CD14-positive monocyte (primary cell): ENCODE measurements at regions of chr1 and their contacts with region 1.

Region 1: GRCh38 chr1:111139956-111140679 is at the starts of genes CEPT1 and DRAM2:
- DNase-seq: peak; percentile 90 to 91 (median 90)
- H3K4me3 ChIP-seq: peak within 1 kb of the TSS; percentile 68 to 99 (median 92)
- H3K4me3 Mint-ChIP-seq: peak within 1 kb of the TSS; percentile 99 to 100
- H3K27ac ChIP-seq: peak within 1 kb of the TSS; percentile 77 to 91
- H3K27ac Mint-ChIP-seq: peak within 1 kb of the TSS; percentile 95 to 99 (median 97)
- H3K4me1 ChIP-seq: peaks cover 35 to 49% of the 10 kb centered on the region in 2 donors
- H3K4me1 Mint-ChIP-seq: peaks cover 56% of the 10 kb centered on the region
- H3K27me3 ChIP-seq: no peaks in the 10 kb centered on the region
- H3K27me3 Mint-ChIP-seq: peaks cover 0 to 1% (median 0%) of the 10 kb centered on the region in 3 donors
- CTCF ChIP-seq: no peak
- polyA plus RNA-seq, gene CEPT1: 20.8 to 44.3 (median 26.9) TPM
- polyA plus RNA-seq, gene DRAM2: 85.9 to 204 (median 190) TPM

Region 2: DNA sequence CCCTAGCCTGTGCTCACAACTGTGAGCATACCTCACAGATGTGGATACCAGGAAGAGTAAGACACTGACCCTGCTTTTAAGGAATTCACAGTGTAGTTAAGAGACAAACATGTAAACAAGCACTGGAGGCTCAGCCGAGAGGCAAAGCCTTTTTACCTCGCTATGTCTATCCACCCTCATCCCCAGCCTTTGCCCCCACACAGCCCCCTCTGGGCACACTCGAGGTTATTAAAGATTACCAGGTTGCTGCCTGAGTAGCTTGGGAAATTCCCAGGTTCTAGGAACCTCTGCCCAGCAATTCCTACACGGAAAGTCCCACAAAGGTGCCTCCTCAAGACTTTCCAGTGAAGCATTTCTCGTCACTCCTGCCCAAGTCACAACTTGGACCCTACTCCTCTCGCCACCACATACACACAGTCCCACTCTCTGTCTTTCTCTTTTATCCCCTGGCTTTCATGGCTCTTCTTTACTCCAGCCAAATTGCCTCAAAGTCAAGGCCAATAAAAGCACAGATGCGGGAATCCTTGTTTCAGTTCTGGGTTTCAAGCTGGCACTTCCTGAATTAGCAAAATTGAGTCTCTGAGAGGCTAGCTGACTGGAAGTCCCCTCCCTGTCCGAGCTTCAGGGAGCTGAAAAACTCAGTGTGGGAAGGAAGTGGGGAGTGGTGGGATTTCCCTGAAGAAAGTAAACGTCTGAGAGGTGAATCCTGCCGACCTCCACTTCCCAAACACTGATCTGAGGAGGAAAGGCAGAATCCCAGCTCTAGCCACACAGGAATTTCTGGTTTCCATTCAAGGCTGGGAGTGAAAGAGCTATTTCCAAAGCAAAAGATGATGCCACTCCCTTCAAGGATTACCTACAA is 52.8 kb after region 1 on chr1:
- intact Hi-C with region 1: loop called in 1 of 2 experiments (anchors 5 kb)
- DNase-seq: peak; percentile 65 to 96 (median 86)
- H3K4me3 ChIP-seq: peak overlapping the region in 1 of 3 experiments; percentile 52
- H3K4me3 Mint-ChIP-seq: peak overlapping the region; percentile 24 to 78
- H3K27ac ChIP-seq: peak overlapping the region; percentile 79 to 86
- H3K27ac Mint-ChIP-seq: peak overlapping the region; percentile 82 to 97 (median 91)
- H3K4me1 ChIP-seq: peaks cover 77 to 90% of the 10 kb centered on the region in 2 donors
- H3K4me1 Mint-ChIP-seq: peaks cover 71% of the 10 kb centered on the region
- H3K27me3 ChIP-seq: no peaks in the 10 kb centered on the region
- H3K27me3 Mint-ChIP-seq: no peaks in the 10 kb centered on the region
- CTCF ChIP-seq: no peak

Region 3: GRCh38 chr1:111346089-111346885 is 206.2 kb after region 1 on chr1:
- intact Hi-C with region 1: no loop called
- DNase-seq: peak; percentile 75 to 83 (median 80)
- H3K4me3 ChIP-seq: peak overlapping the region; percentile 46 to 75 (median 66)
- H3K4me3 Mint-ChIP-seq: peak overlapping the region; percentile 86 to 96
- H3K27ac ChIP-seq: peak overlapping the region; percentile 12 to 21
- H3K27ac Mint-ChIP-seq: peak overlapping the region; percentile 67 to 90 (median 86)
- H3K4me1 ChIP-seq: peaks cover 8 to 12% of the 10 kb centered on the region in 2 donors
- H3K4me1 Mint-ChIP-seq: peaks cover 12% of the 10 kb centered on the region
- H3K27me3 ChIP-seq: peaks cover 0 to 13% of the 10 kb centered on the region in 2 donors
- H3K27me3 Mint-ChIP-seq: peaks cover 2 to 30% (median 19%) of the 10 kb centered on the region in 3 donors
- CTCF ChIP-seq: no peak

Region 4: DNA sequence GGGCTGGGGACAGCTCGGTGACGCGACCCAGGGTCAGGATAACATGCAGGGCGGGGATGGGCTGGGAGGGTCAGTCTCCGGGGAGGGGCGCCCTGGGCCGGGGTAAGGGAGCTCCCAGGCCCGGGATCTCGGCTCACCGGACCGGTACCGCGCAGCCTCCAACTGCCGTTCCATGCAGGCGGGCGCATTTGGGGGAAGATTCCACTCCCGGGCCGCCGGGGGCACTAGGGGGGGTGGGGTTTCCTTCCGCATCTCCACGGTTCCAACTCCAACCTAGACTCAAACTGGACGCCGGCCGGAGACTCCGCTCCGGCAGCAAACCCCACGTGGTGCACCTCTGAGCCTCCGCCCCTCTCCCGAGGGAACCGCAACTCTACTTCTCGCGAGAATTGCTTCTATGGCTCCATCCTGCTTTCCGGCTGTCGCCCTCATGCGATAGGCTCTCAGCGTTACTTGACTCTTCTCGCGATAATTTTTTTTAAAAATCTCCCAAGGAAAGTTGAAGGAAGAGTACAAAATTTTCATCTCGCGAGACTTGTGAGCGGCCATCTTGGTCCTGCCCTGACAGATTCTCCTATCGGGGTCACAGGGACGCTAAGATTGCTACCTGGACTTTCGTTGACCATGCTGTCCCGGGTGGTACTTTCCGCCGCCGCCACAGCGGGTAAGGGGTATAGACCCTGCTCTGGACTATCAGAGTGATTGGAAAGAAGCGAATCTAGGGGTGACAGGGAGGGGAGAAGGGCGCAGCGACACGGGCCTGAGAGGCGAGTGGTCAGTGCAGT is 309.0 kb after region 1 on chr1 and contains the starts of genes ATP5PB and WDR77:
- intact Hi-C with region 1: loop called in 1 of 2 experiments (anchors 10 kb)
- DNase-seq: peak; percentile 98 to 100 (median 99)
- H3K4me3 ChIP-seq: peak within 1 kb of the TSS; percentile 90 to 97 (median 94)
- H3K4me3 Mint-ChIP-seq: peak within 1 kb of the TSS; percentile 99 to 100
- H3K27ac ChIP-seq: peak within 1 kb of the TSS; percentile 87 to 95
- H3K27ac Mint-ChIP-seq: peak within 1 kb of the TSS; percentile 98 to 100 (median 99)
- H3K4me1 ChIP-seq: peaks cover 25 to 41% of the 10 kb centered on the region in 2 donors
- H3K4me1 Mint-ChIP-seq: peaks cover 49% of the 10 kb centered on the region
- H3K27me3 ChIP-seq: no peaks in the 10 kb centered on the region
- H3K27me3 Mint-ChIP-seq: peaks cover 0 to 2% (median 0%) of the 10 kb centered on the region in 3 donors
- CTCF ChIP-seq: no peak
- polyA plus RNA-seq, gene ATP5PB: 112 to 597 (median 557) TPM
- polyA plus RNA-seq, gene WDR77: 26.4 to 62.2 (median 28.1) TPM

Region 5: GRCh38 chr1:111503585-111504060 is 363.5 kb after region 1 on chr1 and contains the starts of genes ADORA3 and TMIGD3:
- intact Hi-C with region 1: no loop called
- DNase-seq: peak; percentile 73 to 81 (median 78)
- H3K4me3 ChIP-seq: peak within 1 kb of the TSS in 1 of 3 experiments; percentile 58
- H3K4me3 Mint-ChIP-seq: peak within 1 kb of the TSS; percentile 7 to 74
- H3K27ac ChIP-seq: peak within 1 kb of the TSS; percentile 66 to 97
- H3K27ac Mint-ChIP-seq: peak within 1 kb of the TSS; percentile 86 to 97 (median 93)
- H3K4me1 ChIP-seq: peaks cover 66 to 68% of the 10 kb centered on the region in 2 donors
- H3K4me1 Mint-ChIP-seq: peaks cover 63% of the 10 kb centered on the region
- H3K27me3 ChIP-seq: no peaks in the 10 kb centered on the region
- H3K27me3 Mint-ChIP-seq: no peaks in the 10 kb centered on the region
- CTCF ChIP-seq: no peak
- polyA plus RNA-seq, gene ADORA3: 1.1 to 2.7 (median 1.2) TPM
- polyA plus RNA-seq, gene TMIGD3: 2.0 to 3.1 (median 2.1) TPM